ENCODE measurements at regions of chr3 and their contacts with region 1.

Region 1: DNA sequence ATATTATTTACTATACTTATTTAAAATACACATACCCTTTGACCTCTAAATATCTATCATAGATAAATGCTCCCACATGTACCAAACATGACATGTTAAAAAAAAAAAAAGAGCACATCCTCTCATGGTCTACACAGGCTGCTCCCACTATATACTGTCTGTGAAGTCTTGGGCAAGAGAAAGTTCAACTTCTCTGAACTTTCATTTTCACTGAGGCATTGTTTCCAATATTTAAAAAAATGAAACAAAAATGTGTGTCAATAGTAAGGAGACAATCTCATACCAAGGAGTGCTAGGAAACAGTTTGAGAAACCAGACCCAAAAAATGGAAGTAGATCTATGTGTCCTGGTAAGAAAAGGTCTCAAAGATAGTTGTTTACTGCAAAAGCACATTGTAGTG is 29.3 kb downstream of the SLC4A7 start:
- DNase-seq: no peak
- H3K4me3 Mint-ChIP-seq: peak overlapping the region; percentile 3
- H3K27ac Mint-ChIP-seq: peak overlapping the region; percentile 85
- H3K4me1 Mint-ChIP-seq: peaks cover 42% of the 10 kb centered on the region
- H3K27me3 Mint-ChIP-seq: no peaks in the 10 kb centered on the region

Region 2: GRCh38 chr3:27147215-27147614 is 307.7 kb before region 1 on chr3:
- intact Hi-C with region 1: no loop called
- DNase-seq: no peak
- H3K4me3 Mint-ChIP-seq: no peak overlapping the region
- H3K27ac Mint-ChIP-seq: no peak overlapping the region
- H3K4me1 Mint-ChIP-seq: no peaks in the 10 kb centered on the region
- H3K27me3 Mint-ChIP-seq: no peaks in the 10 kb centered on the region

Region 3: GRCh38 chr3:27425896-27426565 is 28.9 kb before region 1 on chr3:
- intact Hi-C with region 1: loop called (anchors 2 kb)
- DNase-seq: no peak
- H3K4me3 Mint-ChIP-seq: no peak overlapping the region
- H3K27ac Mint-ChIP-seq: peak overlapping the region; percentile 24
- H3K4me1 Mint-ChIP-seq: peaks cover 14% of the 10 kb centered on the region
- H3K27me3 Mint-ChIP-seq: no peaks in the 10 kb centered on the region

Region 4: DNA sequence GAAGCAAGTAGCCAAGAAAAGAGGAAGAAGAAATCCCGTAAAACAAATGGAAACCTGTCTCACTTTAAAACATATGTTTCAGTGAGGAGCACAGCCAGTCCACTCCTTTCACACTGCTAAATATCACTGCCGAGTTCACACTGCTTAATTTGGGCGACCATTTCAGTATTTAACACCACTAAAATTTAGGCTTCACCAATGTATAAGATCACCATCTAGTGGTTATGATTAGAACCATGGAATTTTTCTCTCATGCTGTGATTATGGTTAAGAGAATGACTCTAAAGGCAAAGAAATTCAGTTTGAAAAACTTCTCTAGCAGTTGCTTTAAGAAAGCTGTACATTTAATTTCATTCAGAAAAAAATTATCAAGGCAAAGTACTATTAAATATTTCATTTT is 12.6 kb after region 1 on chr3:
- intact Hi-C with region 1: loop called (anchors 1 kb)
- DNase-seq: no peak
- H3K4me3 Mint-ChIP-seq: no peak overlapping the region
- H3K27ac Mint-ChIP-seq: no peak overlapping the region
- H3K4me1 Mint-ChIP-seq: peaks cover 14% of the 10 kb centered on the region
- H3K27me3 Mint-ChIP-seq: no peaks in the 10 kb centered on the region

Region 5: GRCh38 chr3:27533718-27534573 is 79.0 kb after region 1 on chr3:
- intact Hi-C with region 1: no loop called
- DNase-seq: no peak
- H3K4me3 Mint-ChIP-seq: no peak overlapping the region
- H3K27ac Mint-ChIP-seq: peak overlapping the region; percentile 82
- H3K4me1 Mint-ChIP-seq: peaks cover 21% of the 10 kb centered on the region
- H3K27me3 Mint-ChIP-seq: no peaks in the 10 kb centered on the region

Region 6: DNA sequence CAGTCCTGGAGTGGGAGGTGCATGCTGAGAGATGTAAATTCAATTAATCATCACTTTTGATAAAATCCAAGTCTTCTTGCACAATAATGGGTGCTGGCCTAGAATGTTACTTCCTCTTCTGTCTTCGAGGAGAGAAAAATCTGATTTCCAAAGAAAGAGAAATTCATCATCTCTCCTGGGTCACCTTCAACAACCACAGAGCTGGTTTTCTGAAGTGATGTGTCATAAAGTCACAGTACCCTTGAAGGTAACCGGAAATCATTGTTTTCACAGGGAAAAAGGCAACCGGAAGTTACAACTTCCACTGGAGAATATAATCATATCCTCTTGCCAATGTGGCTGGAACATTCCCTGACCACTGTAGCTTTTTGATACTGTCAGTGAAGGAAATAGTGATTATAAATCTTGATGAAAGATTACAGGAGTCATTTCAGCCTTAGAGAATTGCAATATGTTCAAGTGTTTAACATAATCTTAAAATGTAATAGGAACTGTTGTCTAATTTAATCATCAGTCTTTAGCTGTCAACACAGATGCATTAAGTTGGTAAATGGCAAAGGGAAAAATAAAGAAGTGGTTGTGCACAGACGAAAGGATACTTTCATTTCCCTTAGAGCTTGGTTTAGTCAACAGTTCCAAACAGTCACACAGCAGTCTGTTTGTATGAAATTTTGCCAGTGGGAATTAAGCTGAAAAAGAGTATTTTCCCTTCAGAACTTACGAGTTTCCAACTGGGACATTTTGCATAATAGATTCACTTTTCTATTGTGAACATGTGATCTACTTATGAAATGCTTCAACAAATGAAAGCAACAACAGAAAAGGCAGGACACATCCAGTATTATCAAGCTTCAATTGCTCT is 135.8 kb after region 1 on chr3:
- intact Hi-C with region 1: loop called (anchors 1 kb)
- DNase-seq: no peak
- H3K4me3 Mint-ChIP-seq: peak overlapping the region; percentile 38
- H3K27ac Mint-ChIP-seq: peak overlapping the region; percentile 81
- H3K4me1 Mint-ChIP-seq: peaks cover 32% of the 10 kb centered on the region
- H3K27me3 Mint-ChIP-seq: no peaks in the 10 kb centered on the region

Region 7: GRCh38 chr3:27639271-27639670 is 184.4 kb after region 1 on chr3:
- intact Hi-C with region 1: loop called (anchors 5 kb)
- DNase-seq: peak; percentile 16
- H3K4me3 Mint-ChIP-seq: peak overlapping the region; percentile 9
- H3K27ac Mint-ChIP-seq: peak overlapping the region; percentile 64
- H3K4me1 Mint-ChIP-seq: peaks cover 17% of the 10 kb centered on the region
- H3K27me3 Mint-ChIP-seq: peaks cover 5% of the 10 kb centered on the region

Measured in activated T-helper 2 cell treated with anti-CD3 and anti-CD28 coated beads, Interferon-gamma antibody, Interleukin-2, Interleukin-4, amounts not matched to agents 10 μg/mL and 5 μg/mL and 100 μg/mL, durations not matched to agents 14 hours and 24 hours and 36 hours (primary cell).